Activated naive CD4-positive, alpha-beta T cell treated with anti-CD3 and anti-CD28 coated beads for 36 hours (primary cell): ENCODE measurements at regions of chr3 and their contacts with region 1.

Region 1: DNA sequence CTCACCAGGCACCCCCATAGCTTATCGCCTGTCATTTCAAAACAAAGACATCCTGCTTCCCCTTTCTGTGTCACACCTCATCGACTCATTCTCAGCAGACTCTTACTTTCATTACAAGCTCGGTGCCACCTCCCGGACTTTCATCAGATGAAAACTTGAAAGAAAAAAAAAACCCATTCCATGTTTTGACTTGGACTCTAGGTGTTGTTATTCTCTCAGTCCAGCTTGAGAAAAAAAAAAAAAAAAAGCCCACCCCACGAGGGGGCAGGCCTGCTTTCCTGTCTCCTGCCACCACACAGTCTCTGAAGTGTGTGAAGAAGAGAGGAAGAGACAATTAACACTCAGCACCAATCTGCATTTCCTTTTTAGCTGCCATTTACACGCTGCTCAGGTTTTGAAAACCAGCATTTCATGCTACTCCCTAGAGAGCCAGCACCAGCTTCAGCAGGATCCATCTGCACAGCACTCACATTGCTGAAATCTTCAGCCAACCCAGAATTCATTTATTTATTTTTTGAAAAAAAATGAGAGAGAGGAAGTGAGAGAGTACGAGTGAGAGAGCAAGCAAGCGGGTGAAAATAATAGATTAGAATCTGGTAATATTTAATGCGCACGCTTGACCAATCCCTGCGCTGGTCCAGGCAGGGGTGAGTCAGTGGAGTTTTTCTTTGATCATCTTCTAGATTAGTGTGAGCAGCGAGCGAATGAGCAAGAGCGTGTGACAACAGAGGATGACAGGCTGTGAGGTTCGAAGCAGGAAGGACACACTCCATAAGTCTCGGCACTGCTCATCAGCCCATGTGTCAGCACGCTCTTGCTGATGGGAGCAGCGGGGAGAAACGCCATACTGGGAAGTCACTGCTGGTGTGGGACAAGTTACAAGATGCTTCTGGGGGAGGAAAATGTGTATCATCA is 23.5 kb downstream of the ZNF80 start:
- DNase-seq: peak; percentile 88
- H3K4me3 Mint-ChIP-seq: no peak overlapping the region
- H3K27ac Mint-ChIP-seq: no peak overlapping the region
- H3K4me1 Mint-ChIP-seq: peaks cover 8% of the 10 kb centered on the region
- H3K27me3 Mint-ChIP-seq: no peaks in the 10 kb centered on the region

Region 2: DNA sequence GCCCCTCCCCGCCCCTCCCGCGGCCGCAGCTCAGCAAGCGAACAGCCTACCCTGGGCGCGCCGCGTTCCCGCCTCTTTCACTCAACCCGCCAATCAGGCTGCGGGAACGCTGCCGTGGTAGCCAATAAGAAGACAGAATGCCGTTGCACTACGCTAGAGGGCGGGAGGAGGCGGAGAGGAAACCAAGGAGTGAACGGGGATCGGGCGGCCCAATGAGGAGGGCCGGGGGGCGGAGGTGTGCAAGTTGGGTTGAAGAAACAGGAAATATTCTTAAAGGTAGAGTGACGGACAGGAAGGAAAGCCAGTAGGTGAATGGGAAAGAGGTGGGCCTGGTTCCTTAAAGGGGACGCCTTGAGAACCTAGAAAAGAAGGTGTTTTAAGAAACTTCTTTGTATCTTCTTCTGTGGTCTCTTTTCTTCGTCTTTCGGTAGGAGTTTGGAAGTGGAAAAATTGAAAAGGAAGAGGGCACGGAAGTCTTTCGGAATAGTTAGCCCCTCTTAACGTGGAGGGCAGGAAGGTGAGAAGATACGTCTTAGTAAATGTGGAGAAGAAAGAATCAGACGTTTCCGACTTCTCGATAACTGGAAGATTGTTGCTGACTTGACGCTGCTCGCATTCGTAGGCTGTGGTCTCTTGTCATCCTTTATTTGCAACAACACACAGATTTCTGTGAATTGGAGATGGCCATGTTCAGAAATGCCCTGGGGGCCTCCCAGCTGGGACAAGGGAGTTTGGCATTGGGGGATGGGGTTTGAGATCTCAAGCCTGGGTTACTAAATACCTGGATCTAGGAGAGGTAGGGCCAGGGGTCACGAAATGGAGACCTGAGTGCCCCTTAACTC is 517.0 kb before region 1 on chr3:
- CTCF ChIA-PET with region 1: no interaction called
- intact Hi-C with region 1: loop called (anchors 1 kb)
- DNase-seq: peak; percentile 99
- H3K4me3 Mint-ChIP-seq: no peak overlapping the region
- H3K27ac Mint-ChIP-seq: no peak overlapping the region
- H3K4me1 Mint-ChIP-seq: peaks cover 25% of the 10 kb centered on the region
- H3K27me3 Mint-ChIP-seq: no peaks in the 10 kb centered on the region

Region 3: DNA sequence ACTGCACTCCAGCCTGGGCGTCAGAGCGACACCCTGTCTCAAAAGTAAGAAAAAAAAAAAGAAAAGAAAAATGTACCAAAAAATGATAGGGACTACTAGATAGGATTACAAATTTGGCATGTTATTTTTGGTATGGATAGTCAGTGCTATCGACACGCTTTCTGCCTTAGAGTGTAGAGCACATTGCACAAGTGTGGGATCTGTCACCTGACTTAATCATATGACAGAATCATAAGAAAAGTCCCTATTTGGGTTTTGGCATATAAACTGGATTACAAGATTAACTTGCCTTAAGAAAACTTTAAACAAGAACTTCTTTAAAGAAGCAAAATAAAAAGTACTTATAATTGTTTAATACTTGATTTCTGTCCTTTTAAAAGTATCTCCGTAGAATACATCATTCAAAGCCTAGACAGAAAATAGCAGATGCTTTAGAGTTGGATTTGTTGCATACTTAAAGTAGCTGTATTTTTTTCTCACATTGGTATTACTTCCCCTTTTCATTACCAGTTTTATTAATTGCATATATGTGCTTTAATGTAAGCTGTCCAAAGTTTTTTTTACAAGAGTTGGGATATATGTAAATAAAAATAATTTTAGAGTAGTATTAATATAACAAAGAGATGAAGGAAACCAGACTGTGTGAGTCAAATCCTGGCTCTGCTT is 459.3 kb before region 1 on chr3:
- CTCF ChIA-PET with region 1: no interaction called
- intact Hi-C with region 1: no loop called
- DNase-seq: no peak
- H3K4me3 Mint-ChIP-seq: no peak overlapping the region
- H3K27ac Mint-ChIP-seq: no peak overlapping the region
- H3K4me1 Mint-ChIP-seq: peaks cover 14% of the 10 kb centered on the region
- H3K27me3 Mint-ChIP-seq: no peaks in the 10 kb centered on the region

Region 4: GRCh38 chr3:114152519-114153151 is 61.2 kb before region 1 on chr3:
- CTCF ChIA-PET with region 1: interaction called, 7 read pairs
- intact Hi-C with region 1: loop called (anchors 1 kb)
- DNase-seq: peak; percentile 90
- H3K4me3 Mint-ChIP-seq: peak overlapping the region; percentile 43
- H3K27ac Mint-ChIP-seq: peak overlapping the region; percentile 53
- H3K4me1 Mint-ChIP-seq: no peaks in the 10 kb centered on the region
- H3K27me3 Mint-ChIP-seq: no peaks in the 10 kb centered on the region

Region 5: DNA sequence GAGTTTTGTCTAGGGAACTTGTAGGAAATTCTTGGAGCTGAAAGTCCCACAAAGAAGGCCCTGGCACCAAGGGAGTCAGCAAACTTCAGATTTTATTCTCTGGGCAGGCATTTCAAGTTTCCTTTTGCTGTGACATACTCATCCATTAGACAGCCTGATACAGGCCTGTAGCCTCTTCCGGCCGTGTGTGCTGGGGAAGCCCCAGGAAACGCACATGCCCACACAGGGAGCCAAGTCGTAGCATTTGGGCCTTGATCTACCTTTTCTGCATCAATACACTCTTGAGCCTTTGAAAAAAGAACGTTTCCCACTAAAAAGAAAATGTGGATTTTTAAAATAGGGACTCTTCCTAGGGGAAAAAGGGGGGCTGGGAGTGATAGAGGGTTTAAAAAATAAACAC is 94.9 kb after region 1 on chr3:
- CTCF ChIA-PET with region 1: no interaction called
- intact Hi-C with region 1: loop called (anchors 1 kb)
- DNase-seq: peak; percentile 57
- H3K4me3 Mint-ChIP-seq: peak overlapping the region; percentile 47
- H3K27ac Mint-ChIP-seq: peak overlapping the region; percentile 89
- H3K4me1 Mint-ChIP-seq: peaks cover 40% of the 10 kb centered on the region
- H3K27me3 Mint-ChIP-seq: no peaks in the 10 kb centered on the region

Region 6: GRCh38 chr3:114338651-114339357 is 124.9 kb after region 1 on chr3:
- CTCF ChIA-PET with region 1: no interaction called
- intact Hi-C with region 1: no loop called
- DNase-seq: no peak
- H3K4me3 Mint-ChIP-seq: no peak overlapping the region
- H3K27ac Mint-ChIP-seq: no peak overlapping the region
- H3K4me1 Mint-ChIP-seq: peaks cover 12% of the 10 kb centered on the region
- H3K27me3 Mint-ChIP-seq: no peaks in the 10 kb centered on the region

Region 7: DNA sequence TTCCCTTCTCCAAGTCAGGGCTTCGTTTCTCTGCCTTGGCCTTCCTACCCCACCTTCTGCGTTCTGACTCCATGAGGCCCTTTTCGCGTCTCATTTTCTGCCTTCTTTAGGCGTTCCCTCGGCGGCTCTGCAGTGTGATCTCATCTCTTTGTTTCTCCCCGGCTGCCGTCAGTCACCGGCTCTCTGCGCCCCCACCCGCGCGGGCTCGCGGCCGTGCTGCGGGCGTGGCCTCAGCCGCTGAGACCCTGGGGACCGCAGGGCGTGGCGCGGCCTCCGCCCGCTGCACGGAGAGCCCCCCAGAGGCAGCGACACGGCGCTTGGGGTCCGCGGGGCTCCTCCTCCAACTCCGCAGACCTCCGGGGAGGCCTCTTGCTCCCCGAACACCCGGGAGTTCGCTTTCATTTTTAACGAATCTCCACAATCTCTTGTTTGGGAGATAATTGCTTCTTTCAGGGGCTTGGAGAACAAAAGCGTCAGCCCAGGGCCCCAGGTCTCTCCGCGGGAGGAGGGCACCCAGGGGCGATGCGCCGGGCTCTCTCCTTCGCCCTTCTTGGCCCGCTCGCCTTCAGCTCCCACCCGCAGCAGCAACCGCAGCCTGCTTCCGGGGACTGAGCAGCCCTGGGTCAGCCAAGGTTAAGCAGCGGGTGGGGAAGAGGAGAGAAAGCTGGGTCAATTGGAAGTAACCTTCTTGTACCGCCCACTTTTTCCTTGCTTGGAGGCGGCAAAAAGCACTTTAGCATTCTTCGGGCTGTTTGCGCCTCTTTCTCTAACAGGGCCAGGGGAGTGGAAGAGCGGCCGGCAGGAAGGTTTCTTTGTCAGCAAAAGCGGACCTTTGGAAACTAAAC is 1444.7 kb after region 1 on chr3:
- CTCF ChIA-PET with region 1: no interaction called
- intact Hi-C with region 1: loop called (anchors 1 kb)
- DNase-seq: peak; percentile 84
- H3K4me3 Mint-ChIP-seq: peak overlapping the region; percentile 90
- H3K27ac Mint-ChIP-seq: peak overlapping the region; percentile 96
- H3K4me1 Mint-ChIP-seq: peaks cover 45% of the 10 kb centered on the region
- H3K27me3 Mint-ChIP-seq: peaks cover 3% of the 10 kb centered on the region